Esophagus muscularis mucosa (tissue), 4 donors: ENCODE measurements at regions of chr17 and their contacts with region 1.

Region 1: DNA sequence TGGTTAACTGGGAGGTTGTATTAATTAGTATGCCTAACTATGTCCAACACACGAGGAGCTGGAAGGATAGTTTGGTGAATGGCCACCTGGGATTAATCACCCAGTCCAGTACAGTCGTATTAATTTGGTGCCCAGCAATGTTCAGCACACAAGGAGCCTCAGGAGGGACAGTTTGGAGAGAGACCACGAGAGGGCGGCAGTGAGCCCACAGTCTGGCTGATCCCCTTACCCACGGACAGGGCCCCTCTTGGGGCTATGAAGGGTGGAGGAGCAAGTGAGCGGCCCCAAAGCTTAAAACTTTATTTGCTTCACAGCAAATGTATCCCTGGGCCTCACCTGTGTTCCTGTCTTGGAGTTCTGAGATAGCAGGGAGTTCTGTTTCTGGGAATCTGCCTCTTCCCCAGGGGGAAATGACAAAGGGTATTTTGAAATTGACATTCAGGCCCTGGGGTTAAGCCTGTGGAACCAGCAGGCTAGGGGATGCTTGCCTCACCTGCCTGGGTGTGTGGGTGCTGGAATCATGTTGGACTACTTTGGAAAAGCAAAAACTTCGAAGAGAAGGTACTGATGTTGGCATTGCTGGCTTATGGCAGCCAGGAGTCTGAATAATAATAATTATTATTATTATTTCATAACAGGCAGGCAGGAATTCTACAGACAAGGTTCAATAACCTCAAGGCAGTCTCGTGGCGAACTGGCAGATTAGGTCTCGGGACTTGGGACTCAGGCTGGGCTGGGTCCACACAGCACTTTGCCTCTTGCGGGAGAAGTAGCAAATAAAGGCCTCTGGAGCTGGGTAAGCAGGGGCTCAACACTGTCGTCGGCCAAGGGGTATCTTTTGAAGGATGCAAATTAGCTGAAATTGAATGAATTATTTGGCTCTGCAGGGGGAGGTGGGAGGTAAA is 227.6 kb upstream of the ASIC2 start:
- DNase-seq: no peak
- H3K4me3 ChIP-seq: no peak overlapping the region
- H3K27ac ChIP-seq: no peak overlapping the region
- H3K4me1 ChIP-seq: peaks cover 0 to 13% (median 10%) of the 10 kb centered on the region in 4 donors
- H3K27me3 ChIP-seq: no peaks in the 10 kb centered on the region
- CTCF ChIP-seq: peak; percentile 53 to 77 (median 70)
- EP300 ChIP-seq: no peak
- POLR2A ChIP-seq: no peak

Region 2: GRCh38 chr17:33647956-33648355 is 127.3 kb after region 1 on chr17:
- intact Hi-C with region 1: loop called (anchors 5 kb)
- DNase-seq: no peak
- H3K4me3 ChIP-seq: no peak overlapping the region
- H3K27ac ChIP-seq: no peak overlapping the region
- H3K4me1 ChIP-seq: peaks cover 0 to 7% (median 2%) of the 10 kb centered on the region in 4 donors
- H3K27me3 ChIP-seq: peaks cover 0 to 10% (median 0%) of the 10 kb centered on the region in 4 donors
- CTCF ChIP-seq: peak; percentile 55 to 65 (median 61)
- EP300 ChIP-seq: no peak
- POLR2A ChIP-seq: no peak

Region 3: GRCh38 chr17:33674685-33675084 is 154.0 kb after region 1 on chr17:
- intact Hi-C with region 1: loop called (anchors 5 kb)
- DNase-seq: no peak
- H3K4me3 ChIP-seq: no peak overlapping the region
- H3K27ac ChIP-seq: no peak overlapping the region
- H3K4me1 ChIP-seq: no peaks in the 10 kb centered on the region
- H3K27me3 ChIP-seq: peaks cover 0 to 7% (median 0%) of the 10 kb centered on the region in 4 donors
- CTCF ChIP-seq: peak; percentile 77 to 83 (median 77)
- EP300 ChIP-seq: no peak
- POLR2A ChIP-seq: no peak

Region 4: GRCh38 chr17:33750943-33751701 is 230.4 kb after region 1 on chr17:
- intact Hi-C with region 1: no loop called
- DNase-seq: no peak
- H3K4me3 ChIP-seq: peak overlapping the region in 2 of 4 donors; percentile 22 to 38
- H3K27ac ChIP-seq: no peak overlapping the region
- H3K4me1 ChIP-seq: peaks cover 4 to 11% (median 7%) of the 10 kb centered on the region in 4 donors
- H3K27me3 ChIP-seq: peaks cover 0 to 75% (median 13%) of the 10 kb centered on the region in 4 donors
- CTCF ChIP-seq: peak; percentile 88 to 93 (median 92)
- EP300 ChIP-seq: no peak
- POLR2A ChIP-seq: no peak